WTC11 (cell line): ENCODE measurements at regions of chr3 and their contacts with region 1.

Region 1: GRCh38 chr3:153043729-153044328 is 118.2 kb upstream of the RAP2B start:
- DNase-seq: no peak
- ATAC-seq: no peak
- H3K4me3 Mint-ChIP-seq: no peak overlapping the region
- H3K27ac Mint-ChIP-seq: no peak overlapping the region
- H3K4me1 Mint-ChIP-seq: peaks cover 5% of the 10 kb centered on the region
- H3K27me3 Mint-ChIP-seq: no peaks in the 10 kb centered on the region
- CTCF ChIP-seq: no peak

Region 2: GRCh38 chr3:153001210-153002078 is 42.4 kb before region 1 on chr3:
- CTCF ChIA-PET with region 1: no interaction called
- POLR2A ChIA-PET with region 1: no interaction called
- DNase-seq: no peak
- ATAC-seq: no peak
- H3K4me3 Mint-ChIP-seq: no peak overlapping the region
- H3K27ac Mint-ChIP-seq: no peak overlapping the region
- H3K4me1 Mint-ChIP-seq: peaks cover 11% of the 10 kb centered on the region
- H3K27me3 Mint-ChIP-seq: no peaks in the 10 kb centered on the region
- CTCF ChIP-seq: no peak

Region 3: DNA sequence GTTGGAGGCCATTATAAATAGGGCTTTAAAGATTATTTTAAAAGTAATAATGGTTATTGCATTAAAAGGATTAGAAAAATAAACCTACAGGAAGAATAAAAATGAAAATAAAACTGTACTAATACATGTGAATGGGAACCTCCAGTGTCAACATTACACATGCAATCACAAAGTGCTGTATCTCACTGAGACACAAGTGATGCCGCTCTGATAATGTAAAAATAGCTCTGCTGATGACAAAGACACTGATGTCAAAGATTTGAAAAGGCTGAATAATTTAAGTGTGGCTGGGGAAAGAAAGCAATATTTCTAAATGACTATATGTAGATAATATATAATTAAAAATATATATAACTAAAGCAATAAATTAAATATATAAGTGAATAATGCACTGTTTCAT is 10.9 kb before region 1 on chr3:
- CTCF ChIA-PET with region 1: interaction called, 10 read pairs
- POLR2A ChIA-PET with region 1: no interaction called
- DNase-seq: no peak
- ATAC-seq: no peak
- H3K4me3 Mint-ChIP-seq: no peak overlapping the region
- H3K27ac Mint-ChIP-seq: no peak overlapping the region
- H3K4me1 Mint-ChIP-seq: no peaks in the 10 kb centered on the region
- H3K27me3 Mint-ChIP-seq: no peaks in the 10 kb centered on the region
- CTCF ChIP-seq: no peak

Region 4: DNA sequence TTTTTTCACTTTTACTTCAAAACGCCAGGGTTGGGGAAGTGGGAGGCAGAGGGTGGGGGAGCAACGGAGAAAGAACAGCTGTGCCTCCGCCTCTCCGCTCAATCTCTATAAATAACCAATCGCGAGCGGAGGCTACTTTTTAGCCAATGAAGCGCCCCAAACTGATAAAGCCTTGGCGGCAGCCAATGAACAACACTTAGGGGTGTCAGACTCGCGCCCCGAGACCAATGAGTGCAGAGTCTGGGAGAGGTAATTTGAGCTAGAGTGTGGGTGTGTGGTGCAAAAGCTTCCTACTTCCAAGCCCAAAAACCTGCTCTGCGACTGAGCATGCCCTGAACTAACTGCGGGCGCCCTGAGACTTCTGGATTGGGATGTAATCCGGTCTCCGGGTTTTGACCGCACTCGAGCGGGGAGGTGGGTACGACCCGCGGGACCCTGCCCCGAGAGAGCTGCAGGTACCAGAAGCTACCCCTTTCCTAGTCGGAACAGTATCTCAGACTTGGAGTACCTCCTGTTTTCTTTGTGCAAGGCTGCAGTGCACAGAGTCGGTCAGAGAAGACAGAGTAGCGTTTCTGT is 117.4 kb after region 1 on chr3:
- CTCF ChIA-PET with region 1: interaction called, 19 read pairs
- POLR2A ChIA-PET with region 1: interaction called, 5 read pairs
- DNase-seq: peak; percentile 94
- ATAC-seq: peak; percentile 89
- H3K4me3 Mint-ChIP-seq: peak overlapping the region; percentile 94
- H3K27ac Mint-ChIP-seq: peak overlapping the region; percentile 99
- H3K4me1 Mint-ChIP-seq: peaks cover 36% of the 10 kb centered on the region
- H3K27me3 Mint-ChIP-seq: peaks cover 3% of the 10 kb centered on the region; the same call in 1 of the 2 replicates
- CTCF ChIP-seq: no peak

Region 5: GRCh38 chr3:153173758-153174516 is 130.1 kb after region 1 on chr3:
- CTCF ChIA-PET with region 1: interaction called, 12 read pairs
- POLR2A ChIA-PET with region 1: no interaction called
- DNase-seq: peak; percentile 16
- ATAC-seq: peak; percentile 91
- H3K4me3 Mint-ChIP-seq: no peak overlapping the region
- H3K27ac Mint-ChIP-seq: peak overlapping the region; percentile 34; the same call in 1 of the 2 replicates
- H3K4me1 Mint-ChIP-seq: peaks cover 15% of the 10 kb centered on the region
- H3K27me3 Mint-ChIP-seq: no peaks in the 10 kb centered on the region
- CTCF ChIP-seq: no peak